Thyroid gland (tissue), 4 donors: ENCODE measurements at regions of chr11 and their contacts with region 1.

Region 1: GRCh38 chr11:47355283-47356128 is 3.0 kb upstream of the MYBPC3 start:
- DNase-seq: peak; percentile 96 to 98
- H3K4me3 ChIP-seq: peak overlapping the region in 1 of 3 donors; percentile 20
- H3K27ac ChIP-seq: peak overlapping the region in 1 of 3 donors; percentile 64
- H3K4me1 ChIP-seq: peaks cover 4 to 7% of the 10 kb centered on the region in 2 donors
- H3K27me3 ChIP-seq: no peaks in the 10 kb centered on the region
- CTCF ChIP-seq: peak; percentile 79 to 98 (median 97)
- POLR2A ChIP-seq: peak in 1 of 2 donors; percentile 4

Region 2: DNA sequence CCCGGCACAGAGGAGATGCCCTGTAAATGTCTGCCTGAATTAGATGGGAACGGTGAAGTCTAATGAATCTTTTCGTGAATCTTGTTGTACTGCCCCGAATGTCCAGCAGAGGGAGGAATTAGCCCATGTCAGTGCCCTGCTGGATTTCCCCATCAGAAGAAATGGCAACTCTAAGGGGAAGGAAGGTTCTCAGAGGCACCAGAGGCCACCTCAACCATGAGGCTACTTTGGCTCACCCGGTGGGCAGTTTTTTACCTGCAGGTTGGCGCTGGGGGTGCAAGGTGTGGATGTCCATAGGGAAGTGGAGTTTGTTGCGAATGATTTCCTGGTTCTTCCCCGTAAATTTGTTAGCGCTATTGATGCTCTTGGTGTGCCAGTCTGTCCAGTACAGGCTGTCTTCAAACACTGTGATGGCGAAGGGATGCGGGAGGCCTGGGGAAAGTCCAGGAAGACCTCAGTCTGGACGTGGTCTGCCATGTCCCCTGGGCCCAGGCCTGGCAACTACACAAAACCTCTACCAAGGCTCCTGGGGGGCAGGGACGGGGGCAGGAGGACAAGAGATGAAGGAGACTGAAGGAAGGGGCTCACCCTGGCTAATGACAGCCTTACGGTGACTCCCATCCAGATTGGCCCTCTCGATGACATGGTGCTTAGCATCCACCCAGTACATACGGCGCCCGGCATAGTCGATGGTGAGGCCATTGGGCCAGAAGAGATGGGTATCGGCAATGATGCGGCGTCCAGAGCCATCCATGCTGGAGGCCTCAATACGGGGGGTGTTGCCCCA is 465.6 kb before region 1 on chr11:
- intact Hi-C with region 1: loop called (anchors 10 kb)
- DNase-seq: peak; percentile 69 to 75
- H3K4me3 ChIP-seq: no peak overlapping the region
- H3K27ac ChIP-seq: no peak overlapping the region
- H3K4me1 ChIP-seq: no peaks in the 10 kb centered on the region
- H3K27me3 ChIP-seq: no peaks in the 10 kb centered on the region
- CTCF ChIP-seq: peak; percentile 71 to 95 (median 84)
- POLR2A ChIP-seq: no peak

Region 3: DNA sequence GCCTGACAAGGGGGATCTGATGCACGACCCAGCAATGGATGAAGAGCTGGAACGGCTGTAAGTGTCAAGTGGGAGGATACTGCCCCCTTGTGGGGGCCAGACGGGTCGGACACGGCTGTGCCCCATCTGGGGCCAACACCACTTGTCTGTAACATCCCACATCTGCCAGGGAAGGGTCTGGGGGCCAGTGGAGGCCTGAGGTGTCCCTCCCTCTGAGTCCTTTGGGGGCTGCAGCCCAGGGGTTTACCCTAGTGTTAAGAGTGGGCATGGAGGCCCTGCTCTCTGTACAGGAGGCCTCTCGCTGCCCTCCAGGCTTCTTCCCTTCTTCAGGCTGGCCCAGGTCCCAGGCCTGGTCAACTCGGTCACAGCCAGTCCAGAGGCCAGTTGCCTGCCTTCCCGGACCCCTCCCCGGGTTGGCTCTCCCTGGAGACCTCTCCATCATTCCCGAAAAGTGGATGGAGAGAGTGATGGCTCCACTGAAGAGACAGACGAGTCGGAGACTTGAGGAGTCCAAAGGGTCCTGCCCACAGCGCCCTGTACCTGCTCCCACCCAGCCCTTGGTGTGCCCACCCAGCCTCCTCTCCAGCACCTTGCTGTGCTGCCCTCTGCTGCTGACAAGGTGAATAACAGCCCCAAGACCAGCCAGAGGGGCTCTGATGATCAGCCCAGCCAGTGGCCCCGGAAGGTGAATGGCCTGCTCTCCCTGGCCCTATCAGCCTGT is 194.2 kb before region 1 on chr11:
- intact Hi-C with region 1: loop called (anchors 5 kb)
- DNase-seq: peak; percentile 51 to 58
- H3K4me3 ChIP-seq: no peak overlapping the region
- H3K27ac ChIP-seq: no peak overlapping the region
- H3K4me1 ChIP-seq: no peaks in the 10 kb centered on the region
- H3K27me3 ChIP-seq: no peaks in the 10 kb centered on the region
- CTCF ChIP-seq: peak in 5 of 6 experiments; percentile 46 to 56 (median 48)
- POLR2A ChIP-seq: no peak

Region 4: GRCh38 chr11:47176328-47177228 is 178.9 kb before region 1 on chr11 and contains the start of gene ARFGAP2:
- intact Hi-C with region 1: loop called (anchors 5 kb)
- DNase-seq: peak; percentile 98
- H3K4me3 ChIP-seq: peak within 1 kb of the TSS; percentile 76 to 90 (median 77)
- H3K27ac ChIP-seq: peak within 1 kb of the TSS; percentile 96 to 98 (median 96)
- H3K4me1 ChIP-seq: peaks cover 20 to 25% of the 10 kb centered on the region in 2 donors
- H3K27me3 ChIP-seq: no peaks in the 10 kb centered on the region
- CTCF ChIP-seq: no peak
- POLR2A ChIP-seq: peak in 1 of 2 donors; percentile 53
- total RNA-seq, gene ARFGAP2: 145 to 194 (median 160) TPM